Lower lobe of right lung (tissue), 2 donors: ENCODE measurements at regions of chr20 and their contacts with region 1.

Region 1: DNA sequence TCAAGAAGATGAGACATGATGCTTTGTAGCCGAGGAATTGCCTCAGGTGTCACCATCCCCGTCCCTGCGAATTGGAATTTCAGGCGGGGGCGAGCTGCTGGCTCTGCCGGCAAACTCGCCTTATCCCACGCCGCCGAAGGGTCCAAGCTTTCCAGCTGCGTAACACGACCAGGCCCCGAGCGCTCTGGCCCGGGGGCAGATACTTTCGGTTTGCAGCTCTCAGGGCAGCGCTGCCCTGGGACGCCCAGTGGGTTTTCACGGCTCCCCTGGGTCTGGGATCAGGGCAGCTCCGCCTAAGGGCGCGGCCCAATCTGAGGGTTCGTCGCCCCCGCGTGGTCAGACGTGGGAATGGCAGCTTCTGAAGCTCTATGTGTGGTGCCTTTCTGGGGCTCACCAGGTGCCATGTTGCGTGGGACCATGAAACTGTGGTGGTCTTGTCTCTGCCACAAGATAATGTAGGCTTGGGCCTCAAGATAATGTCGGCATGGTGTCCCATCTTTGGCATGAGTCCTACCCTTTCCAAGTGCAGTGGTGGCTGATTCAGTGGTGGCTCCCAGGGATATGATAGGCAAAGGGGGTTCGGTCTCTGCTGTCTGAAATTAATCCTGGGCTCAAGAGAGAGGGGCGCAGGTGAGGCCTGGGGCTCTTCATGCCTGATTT is 20.9 kb downstream of the PIGT start:
- DNase-seq: peak; percentile 95
- ATAC-seq: peak; percentile 99
- H3K4me3 ChIP-seq: peak overlapping the region; percentile 60
- H3K27ac ChIP-seq: peak overlapping the region; percentile 76
- H3K4me1 ChIP-seq: peaks cover 6% of the 10 kb centered on the region
- H3K27me3 ChIP-seq: no peaks in the 10 kb centered on the region
- CTCF ChIP-seq: peak; percentile 97

Region 2: GRCh38 chr20:45088247-45088646 is 348.6 kb before region 1 on chr20:
- intact Hi-C with region 1: no loop called
- DNase-seq: no peak
- ATAC-seq: no peak
- H3K4me3 ChIP-seq: no peak overlapping the region
- H3K27ac ChIP-seq: no peak overlapping the region
- H3K4me1 ChIP-seq: peaks cover 8% of the 10 kb centered on the region
- H3K27me3 ChIP-seq: no peaks in the 10 kb centered on the region
- CTCF ChIP-seq: no peak

Region 3: GRCh38 chr20:45279992-45280391 is 156.9 kb before region 1 on chr20:
- intact Hi-C with region 1: no loop called
- DNase-seq: no peak
- ATAC-seq: no peak
- H3K4me3 ChIP-seq: no peak overlapping the region
- H3K27ac ChIP-seq: no peak overlapping the region
- H3K4me1 ChIP-seq: no peaks in the 10 kb centered on the region
- H3K27me3 ChIP-seq: no peaks in the 10 kb centered on the region
- CTCF ChIP-seq: no peak

Region 4: DNA sequence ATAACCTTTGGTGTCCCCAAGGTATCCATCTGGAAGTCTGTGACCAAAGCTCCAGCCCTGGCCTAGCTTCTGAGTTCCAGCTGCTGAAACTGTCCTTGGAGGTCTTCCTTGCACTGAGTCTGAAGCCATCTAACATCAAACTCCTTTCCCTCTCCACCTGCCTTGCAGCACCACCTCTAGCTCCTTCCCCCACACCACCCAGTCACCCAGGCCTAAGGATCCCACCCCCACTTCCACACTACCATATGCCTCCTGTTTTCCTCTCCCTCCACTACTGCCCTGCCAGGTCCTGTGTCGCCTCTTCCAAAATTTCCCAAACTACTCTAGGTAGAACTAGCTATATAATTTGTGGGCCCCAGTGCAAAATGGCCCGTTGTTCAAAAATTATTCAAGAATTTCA is 117.9 kb before region 1 on chr20:
- intact Hi-C with region 1: loop called (anchors 5 kb)
- DNase-seq: no peak
- ATAC-seq: no peak
- H3K4me3 ChIP-seq: no peak overlapping the region
- H3K27ac ChIP-seq: no peak overlapping the region
- H3K4me1 ChIP-seq: no peaks in the 10 kb centered on the region
- H3K27me3 ChIP-seq: peaks cover 23% of the 10 kb centered on the region
- CTCF ChIP-seq: no peak

Region 5: GRCh38 chr20:45341939-45342859 is 94.7 kb before region 1 on chr20:
- intact Hi-C with region 1: no loop called
- DNase-seq: peak; percentile 74
- ATAC-seq: peak; percentile 19 to 30
- H3K4me3 ChIP-seq: peak overlapping the region; percentile 82
- H3K27ac ChIP-seq: peak overlapping the region; percentile 93
- H3K4me1 ChIP-seq: peaks cover 98% of the 10 kb centered on the region
- H3K27me3 ChIP-seq: no peaks in the 10 kb centered on the region
- CTCF ChIP-seq: no peak

Region 6: DNA sequence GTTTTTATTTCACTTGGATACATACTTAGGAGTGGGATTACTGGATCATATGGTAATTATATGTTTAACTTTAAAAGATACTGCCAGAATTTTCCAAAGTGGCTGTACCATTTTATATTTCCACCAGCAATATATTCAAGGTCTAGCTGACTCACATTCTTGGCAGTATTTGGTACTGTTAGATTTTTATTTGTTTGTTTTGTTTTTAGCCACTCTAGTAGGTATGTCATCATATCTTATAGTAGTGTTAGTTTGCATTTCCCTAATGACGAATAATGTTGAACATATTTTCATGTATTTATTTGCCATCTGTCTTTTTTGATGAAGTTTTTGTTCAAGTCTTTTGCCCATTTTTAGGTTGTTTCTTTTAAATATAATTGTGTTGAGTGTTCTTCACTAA is 53.7 kb before region 1 on chr20:
- intact Hi-C with region 1: loop called (anchors 10 kb)
- DNase-seq: no peak
- ATAC-seq: no peak
- H3K4me3 ChIP-seq: no peak overlapping the region
- H3K27ac ChIP-seq: no peak overlapping the region
- H3K4me1 ChIP-seq: no peaks in the 10 kb centered on the region
- H3K27me3 ChIP-seq: no peaks in the 10 kb centered on the region
- CTCF ChIP-seq: no peak

Region 7: GRCh38 chr20:45507011-45507820 is 70.4 kb after region 1 on chr20:
- intact Hi-C with region 1: no loop called
- DNase-seq: no peak
- ATAC-seq: no peak
- H3K4me3 ChIP-seq: no peak overlapping the region
- H3K27ac ChIP-seq: no peak overlapping the region
- H3K4me1 ChIP-seq: no peaks in the 10 kb centered on the region
- H3K27me3 ChIP-seq: peaks cover 5% of the 10 kb centered on the region
- CTCF ChIP-seq: no peak